A673 (cell line): ENCODE measurements at regions of chr16 and their contacts with region 1.

Region 1: GRCh38 chr16:30407102-30407803 is at the start of gene ZNF771:
- DNase-seq: peak; percentile 93
- H3K4me3 ChIP-seq: peak within 1 kb of the TSS; percentile 96
- H3K27ac ChIP-seq: peak within 1 kb of the TSS; percentile 93
- H3K4me1 ChIP-seq: peaks cover 16% of the 10 kb centered on the region
- H3K27me3 ChIP-seq: no peaks in the 10 kb centered on the region
- CTCF ChIP-seq: no peak
- total RNA-seq, gene ZNF771: 21.9 and 22.2 TPM in 2 replicates

Region 2: GRCh38 chr16:30122604-30123160 is 284.6 kb before region 1 on chr16:
- CTCF ChIA-PET with region 1: no interaction called
- POLR2A ChIA-PET with region 1: no interaction called
- intact Hi-C with region 1: loop called (anchors 5 kb)
- DNase-seq: peak; percentile 23
- H3K4me3 ChIP-seq: peak overlapping the region; percentile 90
- H3K27ac ChIP-seq: peak overlapping the region; percentile 74
- H3K4me1 ChIP-seq: peaks cover 4% of the 10 kb centered on the region
- H3K27me3 ChIP-seq: no peaks in the 10 kb centered on the region
- CTCF ChIP-seq: no peak

Region 3: DNA sequence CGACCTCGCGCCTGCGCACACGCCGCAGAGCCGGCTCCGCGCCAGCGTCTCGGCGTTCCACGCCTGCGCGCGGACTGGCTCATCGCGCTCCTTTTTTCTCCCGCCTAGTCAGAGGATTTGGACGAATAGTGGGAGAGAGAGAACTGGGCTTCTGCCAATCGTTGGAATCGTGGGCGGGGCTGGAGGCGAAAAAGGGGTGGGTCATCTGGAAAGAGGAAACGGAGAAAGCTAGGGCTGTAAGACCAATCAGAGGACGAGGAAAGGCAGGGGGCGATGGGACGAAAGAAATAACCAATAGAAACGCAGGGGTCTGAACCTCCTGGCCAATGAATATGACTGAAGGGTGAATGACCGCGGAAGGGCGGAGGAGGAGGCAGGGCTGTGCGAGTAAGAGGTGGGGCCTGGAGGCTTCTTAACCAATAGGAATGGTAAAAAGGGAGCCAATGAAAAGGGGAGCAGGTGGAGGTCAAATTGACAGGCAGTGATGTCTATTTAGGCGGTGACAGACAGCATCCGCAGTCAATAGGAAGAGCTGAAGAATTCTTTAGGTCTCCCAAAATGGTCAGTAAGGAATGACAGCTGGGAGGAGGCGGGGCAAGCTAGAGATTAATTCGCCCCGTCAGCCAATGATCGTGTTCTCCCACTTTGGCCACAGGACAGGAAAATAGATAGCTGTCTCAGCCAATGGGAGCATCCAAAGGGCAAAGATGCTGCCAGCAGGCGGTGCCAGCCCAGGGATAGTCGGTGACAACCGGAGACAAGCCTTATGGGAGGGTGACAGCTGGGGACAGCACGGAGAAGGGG is 36.6 kb before region 1 on chr16 and contains the start of gene TBC1D10B:
- CTCF ChIA-PET with region 1: interaction called, 5 read pairs
- POLR2A ChIA-PET with region 1: interaction called, 4 read pairs
- intact Hi-C with region 1: loop called (anchors 5 kb)
- DNase-seq: peak; percentile 100
- H3K4me3 ChIP-seq: peak within 1 kb of the TSS; percentile 94
- H3K27ac ChIP-seq: peak within 1 kb of the TSS; percentile 84
- H3K4me1 ChIP-seq: peaks cover 8% of the 10 kb centered on the region
- H3K27me3 ChIP-seq: no peaks in the 10 kb centered on the region
- CTCF ChIP-seq: no peak; the same call in 1 of the 2 replicates
- total RNA-seq, gene TBC1D10B: 59.3 and 66.0 TPM in 2 replicates

Region 4: DNA sequence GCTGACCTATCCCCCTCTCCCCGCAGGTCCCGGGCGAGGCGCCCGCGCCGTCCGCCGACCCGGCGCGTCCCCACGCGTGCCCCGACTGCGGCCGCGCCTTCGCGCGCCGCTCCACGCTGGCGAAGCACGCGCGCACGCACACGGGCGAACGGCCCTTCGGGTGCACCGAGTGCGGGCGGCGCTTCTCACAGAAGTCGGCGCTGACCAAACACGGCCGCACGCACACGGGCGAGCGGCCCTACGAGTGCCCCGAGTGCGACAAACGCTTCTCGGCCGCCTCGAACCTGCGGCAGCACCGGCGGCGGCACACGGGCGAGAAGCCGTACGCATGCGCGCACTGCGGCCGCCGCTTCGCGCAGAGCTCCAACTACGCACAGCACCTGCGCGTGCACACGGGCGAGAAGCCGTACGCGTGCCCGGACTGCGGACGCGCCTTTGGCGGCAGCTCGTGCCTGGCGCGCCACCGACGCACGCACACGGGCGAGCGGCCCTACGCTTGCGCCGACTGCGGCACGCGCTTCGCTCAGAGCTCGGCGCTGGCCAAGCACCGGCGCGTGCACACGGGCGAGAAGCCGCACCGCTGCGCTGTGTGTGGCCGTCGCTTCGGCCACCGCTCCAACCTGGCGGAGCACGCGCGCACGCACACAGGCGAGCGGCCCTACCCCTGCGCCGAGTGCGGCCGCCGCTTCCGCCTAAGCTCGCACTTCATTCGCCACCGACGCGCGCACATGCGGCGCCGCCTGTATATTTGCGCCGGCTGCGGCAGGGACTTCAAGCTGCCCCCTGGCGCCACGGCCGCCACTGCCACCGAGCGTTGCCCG is 10.5 kb after region 1 on chr16:
- CTCF ChIA-PET with region 1: interaction called, 18 read pairs
- POLR2A ChIA-PET with region 1: interaction called, 3 read pairs
- intact Hi-C with region 1: no loop called
- DNase-seq: peak; percentile 96
- H3K4me3 ChIP-seq: peak overlapping the region; percentile 53
- H3K27ac ChIP-seq: peak overlapping the region; percentile 70
- H3K4me1 ChIP-seq: peaks cover 4% of the 10 kb centered on the region
- H3K27me3 ChIP-seq: no peaks in the 10 kb centered on the region
- CTCF ChIP-seq: no peak; the same call in 1 of the 2 replicates